ENCODE measurements at regions of chr1 and their contacts with region 1.

Region 1: DNA sequence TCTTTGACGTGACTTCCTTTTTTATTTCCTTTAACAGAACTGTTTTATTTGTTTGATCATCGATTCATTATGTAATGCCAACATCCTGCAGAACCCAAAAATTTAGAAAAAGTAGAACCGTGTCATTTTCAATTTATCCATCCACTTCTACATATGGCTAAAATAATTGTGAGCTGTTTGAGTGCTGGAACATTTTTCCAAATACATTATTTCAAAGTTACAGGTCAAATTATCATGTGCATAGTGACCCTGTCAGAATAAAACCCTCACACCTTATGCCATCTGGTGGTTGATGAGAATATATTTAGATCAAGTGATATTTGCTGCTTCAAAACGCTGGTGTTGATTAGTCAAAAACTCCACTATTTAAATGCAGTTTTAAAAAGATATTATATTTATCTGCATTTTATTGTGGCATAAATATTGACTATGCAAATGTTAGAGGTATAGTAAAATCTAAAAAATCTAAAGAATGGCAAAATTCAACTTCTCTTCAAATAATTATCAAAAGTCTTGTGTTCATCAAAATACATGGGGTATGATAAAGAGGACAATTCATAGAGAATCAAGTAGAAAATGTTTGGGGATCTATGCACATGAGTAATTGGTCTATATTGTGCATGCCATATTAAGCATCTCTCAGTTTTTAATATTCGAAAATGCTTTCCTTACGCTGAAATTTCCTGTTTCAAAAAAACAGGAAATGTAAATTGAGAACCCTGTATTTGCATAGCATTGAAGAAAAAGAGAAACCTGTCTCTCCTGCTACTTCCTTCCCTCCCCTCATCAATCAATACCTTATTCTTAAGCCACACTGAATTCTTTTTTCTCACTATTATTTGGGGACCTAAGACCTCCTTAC is 39.7 kb downstream of the UBE2U start:
- DNase-seq: no peak
- H3K4me3 ChIP-seq: peak overlapping the region in 1 of 2 donors; percentile 4
- H3K27ac ChIP-seq: no peak overlapping the region
- H3K4me1 ChIP-seq: peaks cover 0 to 7% of the 10 kb centered on the region in 2 donors
- H3K27me3 ChIP-seq: no peaks in the 10 kb centered on the region
- CTCF ChIP-seq: peak; percentile 43 to 58 (median 44)

Region 2: DNA sequence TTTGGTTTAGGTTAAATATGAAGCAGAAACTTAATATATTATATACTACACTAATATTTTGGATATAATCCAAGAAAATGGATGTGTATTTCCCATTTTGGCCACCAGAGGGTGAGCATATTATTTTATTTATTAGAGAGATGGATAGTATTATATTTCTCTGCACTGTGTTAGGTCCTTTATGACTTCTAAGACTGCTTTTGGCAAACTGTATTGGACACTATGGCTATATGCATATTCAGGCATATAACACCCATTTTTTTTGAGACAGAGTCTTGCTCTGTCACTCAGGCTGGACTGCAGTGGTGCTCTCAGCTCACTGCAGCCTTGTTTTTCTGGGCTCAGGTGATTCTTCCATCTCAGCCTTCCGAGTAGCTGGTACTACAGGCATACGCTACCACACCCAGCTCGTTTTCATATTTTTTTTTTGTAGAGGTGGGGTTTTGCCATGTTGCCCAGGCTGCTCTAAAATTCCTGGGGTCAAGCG is 667.7 kb before region 1 on chr1:
- intact Hi-C with region 1: loop called (anchors 1 kb)
- DNase-seq: no peak
- H3K4me3 ChIP-seq: no peak overlapping the region
- H3K27ac ChIP-seq: no peak overlapping the region
- H3K4me1 ChIP-seq: no peaks in the 10 kb centered on the region
- H3K27me3 ChIP-seq: no peaks in the 10 kb centered on the region
- CTCF ChIP-seq: peak; percentile 50 to 78 (median 74)

Region 3: DNA sequence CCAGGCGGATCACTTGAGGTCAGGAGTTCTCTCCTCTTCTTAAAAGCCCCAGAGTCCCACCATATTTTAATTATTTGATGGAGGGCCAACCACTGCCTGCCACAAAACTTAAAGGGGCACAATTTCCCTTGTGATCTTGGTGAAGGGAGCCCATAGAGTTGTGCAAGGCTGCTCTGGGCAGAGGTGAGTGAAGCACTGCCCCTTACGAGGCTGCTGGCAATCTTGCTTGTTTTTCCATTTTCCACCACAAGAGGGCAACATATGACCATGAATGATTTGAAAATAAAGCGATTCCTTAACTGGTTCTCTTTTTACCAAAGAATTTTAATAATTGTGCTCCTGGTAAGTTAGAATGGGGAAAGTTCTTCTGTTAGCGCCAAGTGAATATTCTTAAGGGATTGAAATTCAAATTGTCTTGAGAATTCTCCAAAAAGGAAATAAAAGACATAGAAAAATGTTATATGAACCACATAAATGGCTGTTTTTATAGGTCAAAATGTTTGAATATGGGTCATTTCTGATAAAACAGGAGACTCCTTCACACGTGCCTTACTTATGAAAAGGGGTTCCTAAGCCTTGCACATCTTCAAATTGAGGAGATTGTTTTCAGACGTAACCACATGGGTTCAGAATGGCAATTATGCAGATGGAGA is 627.2 kb before region 1 on chr1:
- intact Hi-C with region 1: loop called (anchors 1 kb)
- DNase-seq: peak in 1 of 2 donors; percentile 87
- H3K4me3 ChIP-seq: no peak overlapping the region
- H3K27ac ChIP-seq: no peak overlapping the region
- H3K4me1 ChIP-seq: peaks cover 0 to 13% of the 10 kb centered on the region in 2 donors
- H3K27me3 ChIP-seq: no peaks in the 10 kb centered on the region
- CTCF ChIP-seq: peak; percentile 67 to 85 (median 77)

Region 4: GRCh38 chr1:63674238-63674864 is 568.8 kb before region 1 on chr1:
- intact Hi-C with region 1: loop called (anchors 1 kb)
- DNase-seq: peak in 1 of 2 donors; percentile 89
- H3K4me3 ChIP-seq: no peak overlapping the region
- H3K27ac ChIP-seq: peak overlapping the region; percentile 70 to 73
- H3K4me1 ChIP-seq: peaks cover 0 to 14% of the 10 kb centered on the region in 2 donors
- H3K27me3 ChIP-seq: no peaks in the 10 kb centered on the region
- CTCF ChIP-seq: peak; percentile 57 to 79 (median 66)

Region 5: GRCh38 chr1:63917571-63918417 is 325.3 kb before region 1 on chr1:
- intact Hi-C with region 1: loop called (anchors 10 kb)
- DNase-seq: peak in 1 of 2 donors; percentile 74
- H3K4me3 ChIP-seq: peak overlapping the region in 1 of 2 donors; percentile 32
- H3K27ac ChIP-seq: peak overlapping the region; percentile 72 to 85
- H3K4me1 ChIP-seq: peaks cover 2 to 44% of the 10 kb centered on the region in 2 donors
- H3K27me3 ChIP-seq: no peaks in the 10 kb centered on the region
- CTCF ChIP-seq: peak in 2 of 3 experiments; percentile 7 to 37

Region 6: DNA sequence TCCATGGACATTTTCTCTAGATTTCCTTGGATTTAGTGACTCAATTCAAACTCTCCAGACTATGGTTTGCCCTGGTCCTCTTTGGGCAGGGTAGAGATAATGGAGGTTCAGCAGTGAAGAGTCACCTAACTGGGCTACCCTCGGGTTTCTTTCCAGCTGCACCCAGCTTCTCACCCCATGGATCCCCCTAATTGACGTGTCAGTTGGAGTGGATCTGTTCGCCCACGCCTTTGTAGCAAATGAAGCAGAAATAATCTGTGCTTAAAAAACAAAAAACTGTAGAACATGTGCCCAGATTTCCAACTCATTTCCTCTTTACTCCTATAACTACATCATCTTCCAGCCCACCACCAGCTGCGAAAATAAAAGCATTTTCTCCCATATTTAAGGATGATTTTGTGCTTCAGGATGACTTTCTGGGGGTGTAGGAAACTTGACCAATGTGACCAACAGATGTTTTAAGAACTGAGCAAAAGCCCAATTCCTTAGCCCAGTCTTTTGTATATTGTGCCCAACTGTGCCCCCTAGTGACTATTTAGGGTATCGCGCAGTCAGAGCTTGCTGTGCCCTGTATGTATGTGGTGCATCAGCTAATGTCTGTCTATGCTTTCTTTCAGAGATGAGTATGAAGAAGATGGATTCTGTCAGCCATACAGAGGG is 106.2 kb before region 1 on chr1:
- intact Hi-C with region 1: loop called (anchors 5 kb)
- DNase-seq: peak; percentile 23 to 90
- H3K4me3 ChIP-seq: no peak overlapping the region
- H3K27ac ChIP-seq: peak overlapping the region; percentile 37 to 64
- H3K4me1 ChIP-seq: peaks cover 4 to 42% of the 10 kb centered on the region in 2 donors
- H3K27me3 ChIP-seq: no peaks in the 10 kb centered on the region
- CTCF ChIP-seq: peak; percentile 83 to 90 (median 88)